Endothelial cell of umbilical vein (primary cell): ENCODE measurements at regions of chr12 and their contacts with region 1.

Region 1: GRCh38 chr12:60489071-60489470 is 893.2 kb downstream of the SLC16A7 start:
- DNase-seq: no peak
- H3K4me3 ChIP-seq: no peak overlapping the region
- H3K27ac ChIP-seq: no peak overlapping the region
- H3K4me1 ChIP-seq: no peaks in the 10 kb centered on the region
- H3K27me3 ChIP-seq: no peaks in the 10 kb centered on the region
- CTCF ChIP-seq: no peak
- POLR2A ChIP-seq: no peak

Region 2: DNA sequence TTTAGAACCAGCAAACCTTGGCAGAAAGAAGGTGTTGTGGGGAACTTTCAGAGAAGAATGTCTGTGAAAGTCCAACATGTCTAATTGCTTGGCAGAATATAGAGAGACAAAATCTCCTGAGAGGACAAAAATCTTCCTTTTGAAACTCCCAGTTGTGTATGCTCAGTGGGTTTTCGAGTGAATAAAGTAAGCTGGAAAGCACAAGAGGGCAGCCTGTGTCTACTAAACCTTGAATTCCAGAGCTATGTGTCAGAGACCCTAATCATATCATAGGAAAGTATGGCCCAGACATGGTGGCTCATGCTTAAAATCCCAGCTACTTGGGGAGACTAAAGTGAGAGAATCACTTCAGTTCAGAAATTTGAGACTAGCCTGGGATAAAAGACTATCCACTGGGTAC is 232.0 kb before region 1 on chr12:
- CTCF ChIA-PET with region 1: interaction called, 99 read pairs
- POLR2A ChIA-PET with region 1: no interaction called
- dilution Hi-C with region 1: no loop called
- intact Hi-C with region 1: loop called (anchors 1 kb)
- DNase-seq: peak; percentile 82
- H3K4me3 ChIP-seq: no peak overlapping the region
- H3K27ac ChIP-seq: no peak overlapping the region
- H3K4me1 ChIP-seq: no peaks in the 10 kb centered on the region
- H3K27me3 ChIP-seq: no peaks in the 10 kb centered on the region
- CTCF ChIP-seq: peak; percentile 14 to 33
- POLR2A ChIP-seq: no peak

Region 3: DNA sequence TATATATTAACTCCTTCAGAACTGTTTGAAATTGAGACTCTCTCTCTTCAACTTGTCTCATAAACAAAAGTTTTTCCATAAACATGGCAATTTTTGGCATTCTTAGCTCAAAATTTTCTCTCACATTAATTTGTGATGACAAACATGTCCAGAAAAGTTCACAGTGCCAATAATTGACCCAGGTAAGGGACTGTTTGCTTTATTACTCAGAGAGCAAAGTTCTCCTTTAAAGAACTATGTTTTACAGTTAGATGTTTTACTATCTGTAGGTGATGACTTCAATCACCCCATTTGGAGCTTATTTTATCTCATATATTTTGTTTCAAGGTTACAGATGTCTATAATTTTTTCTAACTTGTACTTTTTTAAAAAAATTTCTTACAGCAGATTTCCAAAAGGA is 37.6 kb before region 1 on chr12:
- CTCF ChIA-PET with region 1: no interaction called
- POLR2A ChIA-PET with region 1: no interaction called
- dilution Hi-C with region 1: no loop called
- intact Hi-C with region 1: no loop called
- DNase-seq: no peak
- H3K4me3 ChIP-seq: no peak overlapping the region
- H3K27ac ChIP-seq: no peak overlapping the region
- H3K4me1 ChIP-seq: no peaks in the 10 kb centered on the region
- H3K27me3 ChIP-seq: no peaks in the 10 kb centered on the region
- CTCF ChIP-seq: no peak
- POLR2A ChIP-seq: no peak

Region 4: DNA sequence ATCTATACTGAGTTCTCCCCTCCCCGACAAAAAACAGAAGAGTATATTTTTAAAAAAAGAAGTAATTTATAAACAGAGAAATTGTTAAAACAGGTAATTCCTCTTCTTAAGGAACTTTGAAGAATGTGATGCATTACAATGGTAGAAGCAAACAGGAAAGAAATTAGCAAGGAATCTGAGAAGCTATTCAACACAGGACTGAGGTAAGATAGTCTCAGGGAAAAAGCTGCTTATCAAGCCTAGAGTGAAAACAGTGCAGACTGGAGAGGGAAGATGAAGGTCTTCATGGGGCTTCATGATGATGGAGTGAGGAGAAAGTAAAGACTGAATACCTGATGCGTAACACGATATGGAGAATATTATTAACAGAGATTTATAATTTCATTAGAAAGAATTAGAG is 13.2 kb before region 1 on chr12:
- CTCF ChIA-PET with region 1: interaction called, 12 read pairs
- POLR2A ChIA-PET with region 1: no interaction called
- dilution Hi-C with region 1: no loop called
- intact Hi-C with region 1: no loop called
- DNase-seq: no peak
- H3K4me3 ChIP-seq: no peak overlapping the region
- H3K27ac ChIP-seq: no peak overlapping the region
- H3K4me1 ChIP-seq: no peaks in the 10 kb centered on the region
- H3K27me3 ChIP-seq: no peaks in the 10 kb centered on the region
- CTCF ChIP-seq: no peak
- POLR2A ChIP-seq: no peak